ENCODE measurements at regions of chr5 and their contacts with region 1.

Region 1: DNA sequence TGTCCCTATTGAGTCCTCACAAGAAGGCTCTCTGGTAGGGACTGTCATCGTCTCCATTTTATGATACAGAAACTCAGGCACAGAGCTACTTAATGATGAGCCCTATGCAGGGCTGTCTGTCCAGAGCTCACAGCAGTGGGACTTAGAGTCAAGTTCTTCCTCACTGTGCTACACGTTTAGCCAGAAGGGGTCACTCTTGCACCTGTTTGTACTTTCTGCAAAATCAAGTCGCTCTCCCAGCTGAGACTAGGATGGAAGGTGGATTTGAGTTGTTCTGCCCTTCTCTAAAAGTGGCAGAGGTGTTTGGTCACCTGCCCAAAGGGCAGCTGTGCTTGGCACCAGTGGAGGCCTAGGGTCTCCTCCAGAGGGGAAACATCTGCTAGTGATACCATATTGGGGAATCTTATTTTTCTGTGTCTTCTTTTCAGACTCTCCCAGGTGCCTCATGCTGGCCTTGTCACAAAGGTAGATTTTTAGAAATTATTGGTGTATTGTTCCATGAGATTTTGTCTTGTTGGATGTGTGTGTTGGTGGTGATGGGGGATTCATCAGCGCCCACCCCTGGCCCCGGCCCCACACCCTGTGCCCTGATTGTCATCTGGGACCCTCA is 104.2 kb downstream of the PPARGC1B start:
- DNase-seq: peak; percentile 75
- ATAC-seq: peak; percentile 48
- H3K4me3 Mint-ChIP-seq: no peak overlapping the region
- H3K27ac Mint-ChIP-seq: no peak overlapping the region
- H3K4me1 Mint-ChIP-seq: peaks cover 9% of the 10 kb centered on the region
- H3K27me3 Mint-ChIP-seq: no peaks in the 10 kb centered on the region
- CTCF ChIP-seq: peak; percentile 63

Region 2: DNA sequence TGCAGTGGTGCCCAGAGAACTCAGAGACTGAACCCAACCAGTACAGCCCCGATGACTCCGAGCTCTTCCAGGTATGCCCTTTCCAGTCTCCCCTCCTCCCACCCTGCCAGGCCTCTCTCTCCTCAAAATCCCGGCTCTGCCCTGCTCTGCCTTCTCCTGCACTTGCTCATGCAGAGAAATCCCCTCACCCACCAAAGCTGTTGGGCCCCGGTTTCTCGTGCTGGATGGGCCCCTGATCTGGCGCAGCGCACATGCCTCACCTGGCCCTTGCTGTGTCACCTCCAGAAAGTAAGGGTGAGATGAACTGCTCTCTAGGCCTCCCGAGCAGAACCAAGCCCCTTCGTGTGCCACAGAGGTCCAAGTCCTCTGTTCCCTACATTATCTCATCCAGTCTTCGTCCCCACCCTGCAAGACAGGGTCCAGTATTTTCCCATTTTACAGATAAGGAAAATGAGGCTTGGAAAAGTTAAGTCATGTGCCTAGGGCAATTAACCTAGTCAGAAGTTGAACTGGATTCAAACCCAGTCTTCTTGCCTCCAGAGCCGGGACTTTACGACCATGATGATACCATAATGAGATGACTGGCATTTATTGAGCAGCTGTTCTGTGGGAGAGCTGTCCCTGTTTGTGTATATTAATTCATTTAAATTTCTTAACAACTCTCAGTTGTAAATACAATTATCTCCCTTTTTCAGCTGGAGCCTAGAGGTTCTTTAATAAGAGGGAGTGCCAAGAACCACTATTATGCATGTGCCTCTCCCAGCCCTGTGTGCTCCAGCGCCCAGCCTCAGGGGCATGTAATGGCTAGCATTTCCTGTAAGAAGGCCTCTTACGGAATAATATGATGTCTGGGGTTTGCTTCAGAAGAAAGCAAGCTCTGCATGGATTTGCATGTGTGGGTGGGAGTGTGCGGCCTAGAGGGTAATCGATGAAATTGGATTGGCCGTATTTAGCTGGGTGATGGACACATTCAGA is 13.5 kb before region 1 on chr5:
- CTCF ChIA-PET with region 1: interaction called, 29 read pairs
- POLR2A ChIA-PET with region 1: no interaction called
- intact Hi-C with region 1: no loop called
- DNase-seq: no peak
- ATAC-seq: no peak
- H3K4me3 Mint-ChIP-seq: no peak overlapping the region
- H3K27ac Mint-ChIP-seq: no peak overlapping the region
- H3K4me1 Mint-ChIP-seq: no peaks in the 10 kb centered on the region
- H3K27me3 Mint-ChIP-seq: no peaks in the 10 kb centered on the region
- CTCF ChIP-seq: no peak

Region 3: DNA sequence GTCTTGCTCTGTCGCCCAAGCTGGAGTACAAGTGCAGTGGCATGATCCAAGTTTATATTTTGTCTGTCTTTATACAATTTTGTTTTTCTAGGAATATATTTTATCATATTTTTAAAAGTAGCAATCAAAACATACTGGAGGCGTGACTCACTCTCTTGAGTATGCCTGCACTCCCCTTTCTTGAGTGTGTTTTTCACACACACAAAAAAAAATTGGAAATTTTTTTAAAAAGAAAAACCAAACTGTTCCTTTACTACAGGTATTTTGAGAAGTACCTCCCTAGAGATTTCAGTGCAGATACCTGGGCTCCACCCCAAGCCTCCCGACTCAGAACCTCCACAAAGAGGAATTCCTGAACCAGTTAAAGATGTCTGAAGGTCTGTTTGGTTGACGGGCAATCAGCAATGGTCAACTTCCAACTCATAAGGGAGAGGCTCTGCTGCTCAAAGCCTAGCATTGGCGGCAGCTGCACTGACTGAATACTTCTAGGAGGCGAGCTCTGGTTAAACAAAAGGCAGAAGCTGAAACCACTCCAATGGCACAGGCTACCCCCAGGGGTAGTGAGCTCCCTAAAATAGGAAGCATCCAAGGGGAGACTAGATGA is 82.8 kb after region 1 on chr5:
- CTCF ChIA-PET with region 1: no interaction called
- POLR2A ChIA-PET with region 1: no interaction called
- intact Hi-C with region 1: no loop called
- DNase-seq: no peak
- ATAC-seq: no peak
- H3K4me3 Mint-ChIP-seq: no peak overlapping the region
- H3K27ac Mint-ChIP-seq: no peak overlapping the region
- H3K4me1 Mint-ChIP-seq: no peaks in the 10 kb centered on the region
- H3K27me3 Mint-ChIP-seq: peaks cover 7% of the 10 kb centered on the region
- CTCF ChIP-seq: no peak

Measured in activated CD8-positive, alpha-beta T cell treated with anti-CD3 and anti-CD28 coated beads for 36 hours (primary cell).